Esophagus squamous epithelium (tissue), 5 donors: ENCODE measurements at regions of chr21 and their contacts with region 1.

Region 1: GRCh38 chr21:39125752-39126485 is 57.3 kb downstream of the PSMG1 start:
- DNase-seq: no peak
- H3K4me3 ChIP-seq: no peak overlapping the region
- H3K27ac ChIP-seq: peak overlapping the region in 3 of 4 donors; percentile 6 to 60 (median 49)
- H3K4me1 ChIP-seq: peaks cover 0 to 17% (median 0%) of the 10 kb centered on the region in 3 donors
- H3K27me3 ChIP-seq: no peaks in the 10 kb centered on the region
- CTCF ChIP-seq: peak; percentile 39 to 73 (median 65)
- POLR2A ChIP-seq: no peak

Region 2: GRCh38 chr21:38913120-38913892 is 212.6 kb before region 1 on chr21:
- intact Hi-C with region 1: loop called (anchors 10 kb)
- DNase-seq: no peak
- H3K4me3 ChIP-seq: peak overlapping the region in 3 of 4 donors; percentile 18 to 33 (median 26)
- H3K27ac ChIP-seq: peak overlapping the region; percentile 89 to 95 (median 94)
- H3K4me1 ChIP-seq: peaks cover 35 to 99% (median 74%) of the 10 kb centered on the region in 3 donors
- H3K27me3 ChIP-seq: no peaks in the 10 kb centered on the region
- CTCF ChIP-seq: no peak
- POLR2A ChIP-seq: no peak

Region 3: GRCh38 chr21:38937844-38938742 is 187.8 kb before region 1 on chr21:
- intact Hi-C with region 1: no loop called
- DNase-seq: no peak
- H3K4me3 ChIP-seq: no peak overlapping the region
- H3K27ac ChIP-seq: no peak overlapping the region
- H3K4me1 ChIP-seq: no peaks in the 10 kb centered on the region
- H3K27me3 ChIP-seq: no peaks in the 10 kb centered on the region
- CTCF ChIP-seq: no peak
- POLR2A ChIP-seq: no peak